ENCODE measurements at regions of chr7 and their contacts with region 1.

Region 1: DNA sequence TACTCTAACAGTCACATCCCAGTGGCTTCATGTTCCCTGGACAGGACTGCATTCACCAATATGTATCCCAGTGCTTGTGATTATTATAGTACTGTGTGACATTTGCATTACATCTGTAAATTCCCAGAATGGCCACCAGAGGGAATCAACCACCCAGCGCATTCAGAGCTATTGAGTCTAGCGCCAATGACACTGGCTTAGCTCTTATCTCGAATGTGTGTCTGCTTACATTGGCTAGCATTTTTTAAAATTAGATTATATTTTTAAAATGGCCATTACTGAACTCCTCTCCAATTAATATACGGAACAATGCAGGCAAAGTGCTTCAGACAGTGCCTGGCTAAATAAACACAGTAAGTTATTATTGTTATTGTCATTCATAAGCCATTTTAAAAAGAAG is 36.3 kb downstream of the TRIL start:
- H3K4me3 ChIP-seq: no peak overlapping the region
- H3K27ac ChIP-seq: no peak overlapping the region
- H3K4me1 ChIP-seq: no peaks in the 10 kb centered on the region; the same call in 1 of the 2 replicates
- CTCF ChIP-seq: 0 out of 2 replicates have a peak, but pooled peaks have one; percentile 33

Region 2: GRCh38 chr7:28389504-28390395 is 532.1 kb before region 1 on chr7:
- CTCF ChIA-PET with region 1: interaction called, 24 read pairs
- POLR2A ChIA-PET with region 1: no interaction called
- H3K4me3 ChIP-seq: peak overlapping the region; percentile 41
- H3K27ac ChIP-seq: peak overlapping the region; percentile 41
- H3K4me1 ChIP-seq: no peaks in the 10 kb centered on the region
- CTCF ChIP-seq: peak; percentile 29; the same call in 1 of the 2 replicates

Region 3: DNA sequence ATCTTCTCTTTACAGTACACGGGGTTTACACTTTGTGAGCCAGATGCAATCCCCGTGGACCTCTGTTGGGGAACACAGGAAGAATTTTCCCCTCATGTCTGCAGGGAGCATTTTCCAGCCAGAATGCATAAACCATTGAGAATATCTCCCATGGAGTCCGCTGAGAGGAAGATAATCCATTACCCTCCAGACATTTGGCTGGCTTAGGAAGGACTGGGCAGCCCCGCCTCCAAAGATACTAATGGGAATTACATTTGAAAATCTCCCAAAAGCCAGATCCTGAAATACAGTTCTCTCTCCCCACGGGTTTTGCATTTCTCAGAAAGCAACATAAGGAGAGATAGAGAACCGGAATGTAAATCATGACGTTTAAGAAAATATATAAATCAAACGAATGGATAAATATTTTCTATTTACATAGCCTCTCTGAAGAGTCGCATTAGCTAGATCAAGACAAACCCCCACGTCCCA is 17.2 kb before region 1 on chr7:
- CTCF ChIA-PET with region 1: interaction called, 62 read pairs
- POLR2A ChIA-PET with region 1: no interaction called
- H3K4me3 ChIP-seq: no peak overlapping the region
- H3K27ac ChIP-seq: peak overlapping the region; percentile 39; the same call in 1 of the 2 replicates
- H3K4me1 ChIP-seq: peaks cover 7% of the 10 kb centered on the region; the same call in 1 of the 2 replicates
- CTCF ChIP-seq: no peak

Region 4: GRCh38 chr7:28939844-28940544 is 18.2 kb after region 1 on chr7:
- CTCF ChIA-PET with region 1: interaction called, 61 read pairs
- POLR2A ChIA-PET with region 1: interaction called, 5 read pairs
- H3K4me3 ChIP-seq: no peak overlapping the region
- H3K27ac ChIP-seq: no peak overlapping the region; the same call in 1 of the 2 replicates
- H3K4me1 ChIP-seq: peaks cover 12% of the 10 kb centered on the region; the same call in 1 of the 2 replicates
- CTCF ChIP-seq: no peak

Region 5: DNA sequence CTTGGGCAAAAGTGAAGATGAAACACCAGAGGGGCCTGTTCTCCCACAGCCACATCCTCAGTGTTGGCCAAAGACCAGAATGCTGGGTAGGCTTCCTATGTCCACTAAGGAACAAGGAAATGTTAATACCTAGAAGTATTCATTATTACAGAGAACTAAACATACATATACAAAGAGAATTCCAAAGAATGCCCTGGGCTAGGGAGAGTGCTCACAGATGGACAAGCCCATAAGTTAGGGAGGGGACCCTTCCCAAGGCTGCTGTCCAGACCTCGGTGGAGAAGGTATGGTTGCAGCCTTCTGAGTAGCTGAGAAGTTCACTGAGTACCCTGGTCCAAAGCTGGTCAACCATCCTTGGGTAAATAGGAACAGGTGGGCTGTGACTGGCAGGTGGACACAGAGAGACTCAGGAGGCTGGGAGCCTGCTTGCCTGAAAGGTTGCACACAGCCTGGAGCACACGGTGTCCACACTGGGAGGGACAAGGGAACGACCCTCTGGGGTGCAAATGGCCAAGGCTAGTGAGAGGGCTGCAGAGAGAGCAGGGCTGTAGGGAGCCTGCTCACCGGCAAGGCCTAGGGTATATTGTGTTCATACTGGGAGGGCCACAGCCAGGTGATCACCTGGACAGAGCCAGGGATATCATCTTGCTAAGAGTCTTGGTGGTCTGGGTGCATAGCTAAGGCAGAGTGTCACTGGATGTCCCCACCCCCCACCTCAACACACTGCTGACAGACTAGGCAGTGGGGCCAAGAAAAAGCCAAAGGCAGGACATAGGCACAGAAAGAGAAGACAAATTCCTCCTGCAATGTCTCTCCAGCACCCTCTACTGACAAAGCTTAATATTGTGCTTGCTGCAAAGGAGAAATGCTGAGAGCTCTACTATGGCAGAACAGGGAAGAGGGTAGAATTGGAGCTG is 184.2 kb after region 1 on chr7:
- CTCF ChIA-PET with region 1: interaction called, 210 read pairs
- POLR2A ChIA-PET with region 1: interaction called, 4 read pairs
- H3K4me3 ChIP-seq: no peak overlapping the region
- H3K27ac ChIP-seq: no peak overlapping the region
- H3K4me1 ChIP-seq: no peaks in the 10 kb centered on the region
- CTCF ChIP-seq: peak; percentile 64

Region 6: GRCh38 chr7:29408841-29409243 is 487.0 kb after region 1 on chr7:
- CTCF ChIA-PET with region 1: interaction called, 99 read pairs
- POLR2A ChIA-PET with region 1: no interaction called
- H3K4me3 ChIP-seq: no peak overlapping the region
- H3K27ac ChIP-seq: no peak overlapping the region
- H3K4me1 ChIP-seq: no peaks in the 10 kb centered on the region
- CTCF ChIP-seq: peak; percentile 29; the same call in 1 of the 2 replicates